ENCODE measurements at regions of chr10 and their contacts with region 1.

Region 1: GRCh38 chr10:101569838-101570766 is 18.0 kb downstream of the POLL start:
- DNase-seq: peak; percentile 85
- H3K4me3 Mint-ChIP-seq: peak overlapping the region; percentile 61
- H3K27ac Mint-ChIP-seq: no peak overlapping the region
- H3K4me1 Mint-ChIP-seq: peaks cover 13% of the 10 kb centered on the region
- H3K27me3 Mint-ChIP-seq: peaks cover 44% of the 10 kb centered on the region

Region 2: GRCh38 chr10:101161494-101162299 is 408.4 kb before region 1 on chr10:
- CTCF ChIA-PET with region 1: interaction called, 3 read pairs
- POLR2A ChIA-PET with region 1: no interaction called
- intact Hi-C with region 1: loop called (anchors 5 kb)
- DNase-seq: peak; percentile 82
- H3K4me3 Mint-ChIP-seq: no peak overlapping the region
- H3K27ac Mint-ChIP-seq: no peak overlapping the region
- H3K4me1 Mint-ChIP-seq: peaks cover 8% of the 10 kb centered on the region
- H3K27me3 Mint-ChIP-seq: peaks cover 53% of the 10 kb centered on the region

Region 3: DNA sequence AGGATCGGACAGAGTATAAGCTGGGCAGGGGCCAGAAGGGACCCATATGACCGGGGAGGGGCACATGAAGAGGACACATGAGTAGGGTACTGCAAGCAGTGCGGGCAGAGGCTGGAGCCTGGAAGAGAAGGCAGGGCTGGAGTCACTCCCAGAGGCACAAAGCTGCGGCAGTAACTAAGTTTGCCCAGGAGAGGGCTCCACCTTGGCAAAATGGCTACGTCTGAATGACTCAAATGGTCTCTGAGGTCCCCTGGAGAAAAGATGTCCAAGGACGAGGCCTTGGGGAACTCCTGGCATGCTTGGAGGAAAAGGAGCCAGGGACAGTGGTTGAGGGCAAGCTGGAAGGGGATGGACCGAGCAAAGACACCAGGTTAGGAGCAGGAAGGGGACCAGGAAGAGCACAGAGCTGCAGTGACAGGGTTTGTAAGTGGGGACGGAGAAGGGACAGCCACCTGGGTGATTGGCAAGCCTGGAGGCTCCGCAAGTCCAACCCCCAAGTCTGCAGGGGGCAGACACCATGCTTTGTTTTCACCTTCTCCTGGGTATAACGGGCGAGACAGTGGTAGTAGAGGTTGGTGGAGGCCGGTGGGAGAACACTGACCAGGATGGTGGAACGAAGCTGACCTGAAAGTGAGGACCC is 297.8 kb before region 1 on chr10:
- CTCF ChIA-PET with region 1: interaction called, 23 read pairs
- POLR2A ChIA-PET with region 1: no interaction called
- intact Hi-C with region 1: no loop called
- DNase-seq: peak; percentile 73
- H3K4me3 Mint-ChIP-seq: no peak overlapping the region
- H3K27ac Mint-ChIP-seq: no peak overlapping the region
- H3K4me1 Mint-ChIP-seq: no peaks in the 10 kb centered on the region
- H3K27me3 Mint-ChIP-seq: peaks cover 15% of the 10 kb centered on the region

Region 4: DNA sequence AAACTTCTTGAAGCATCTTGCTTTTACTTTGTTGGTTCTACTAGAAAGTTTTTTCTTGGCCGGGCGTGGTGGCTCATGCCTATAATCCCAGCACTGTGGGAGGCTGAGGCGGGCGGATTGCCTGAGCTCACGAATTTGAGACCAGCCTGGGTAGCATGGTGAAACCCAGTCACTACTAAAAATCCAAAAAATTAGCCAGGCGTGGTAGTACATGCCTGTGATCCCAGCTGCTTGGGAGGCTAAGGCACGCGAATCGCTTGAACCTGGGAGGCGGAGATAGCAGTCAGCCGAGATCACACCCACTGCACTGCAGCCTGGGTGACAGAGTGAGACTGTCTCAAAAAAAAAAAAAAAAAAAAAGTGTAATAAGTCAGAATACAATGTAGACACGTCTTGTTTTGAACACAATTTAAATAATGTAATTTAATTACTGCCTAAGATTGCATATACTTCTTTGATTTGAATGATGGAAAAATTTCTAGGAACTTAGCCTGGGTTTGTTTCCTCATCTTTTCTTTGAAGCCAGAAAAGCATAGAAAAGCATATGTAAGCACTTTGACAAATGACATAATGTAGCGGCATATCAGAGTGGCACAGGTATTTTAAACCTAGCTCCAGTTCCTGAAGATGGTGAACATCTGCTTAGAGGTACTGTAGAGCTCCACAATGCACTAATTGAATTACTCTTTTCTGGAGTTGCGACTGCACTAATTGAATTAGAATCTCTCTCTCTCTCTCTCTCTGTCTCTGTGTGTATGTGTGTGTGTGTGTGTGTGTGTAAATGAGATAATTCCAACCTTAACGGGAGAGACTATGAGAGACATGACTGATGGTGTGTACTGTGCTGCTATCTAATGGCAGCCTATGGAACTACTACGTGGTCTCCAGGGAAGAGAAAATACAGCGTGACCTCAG is 128.3 kb before region 1 on chr10:
- CTCF ChIA-PET with region 1: interaction called, 10 read pairs
- POLR2A ChIA-PET with region 1: no interaction called
- intact Hi-C with region 1: no loop called
- DNase-seq: peak; percentile 12
- H3K4me3 Mint-ChIP-seq: no peak overlapping the region
- H3K27ac Mint-ChIP-seq: no peak overlapping the region
- H3K4me1 Mint-ChIP-seq: peaks cover 8% of the 10 kb centered on the region
- H3K27me3 Mint-ChIP-seq: no peaks in the 10 kb centered on the region

Region 5: GRCh38 chr10:101536800-101537199 is 33.3 kb before region 1 on chr10:
- CTCF ChIA-PET with region 1: interaction called, 29 read pairs
- POLR2A ChIA-PET with region 1: no interaction called
- intact Hi-C with region 1: loop called (anchors 2 kb)
- DNase-seq: no peak
- H3K4me3 Mint-ChIP-seq: no peak overlapping the region
- H3K27ac Mint-ChIP-seq: no peak overlapping the region
- H3K4me1 Mint-ChIP-seq: no peaks in the 10 kb centered on the region
- H3K27me3 Mint-ChIP-seq: no peaks in the 10 kb centered on the region

Region 6: GRCh38 chr10:101587725-101588653 is 17.9 kb after region 1 on chr10 and contains the starts of genes DPCD and POLL:
- CTCF ChIA-PET with region 1: interaction called, 26 read pairs
- POLR2A ChIA-PET with region 1: no interaction called
- intact Hi-C with region 1: no loop called
- DNase-seq: peak; percentile 95
- H3K4me3 Mint-ChIP-seq: peak within 1 kb of the TSS; percentile 91
- H3K27ac Mint-ChIP-seq: peak within 1 kb of the TSS; percentile 69
- H3K4me1 Mint-ChIP-seq: peaks cover 21% of the 10 kb centered on the region
- H3K27me3 Mint-ChIP-seq: no peaks in the 10 kb centered on the region
- total RNA-seq, gene DPCD: 13.9 to 14.4 TPM
- total RNA-seq, gene POLL: 29.4 to 30.8 TPM

Measured in activated CD4-positive, alpha-beta memory T cell treated with anti-CD3 and anti-CD28 coated beads for 36 hours (primary cell).